CD8-positive, alpha-beta T cell (primary cell): ENCODE measurements at regions of chr1 and their contacts with region 1.

Region 1: GRCh38 chr1:203702130-203702577 is 62.8 kb upstream of the LAX1 start:
- DNase-seq: peak; percentile 33 to 84 (median 75)
- ATAC-seq: peak; percentile 70
- H3K4me3 ChIP-seq: no peak overlapping the region
- H3K4me3 Mint-ChIP-seq: no peak overlapping the region
- H3K27ac ChIP-seq: peak overlapping the region in 1 of 2 experiments; percentile 29
- H3K27ac Mint-ChIP-seq: peak overlapping the region; percentile 69
- H3K4me1 ChIP-seq: no peaks in the 10 kb centered on the region
- H3K4me1 Mint-ChIP-seq: peaks cover 4% of the 10 kb centered on the region
- H3K27me3 ChIP-seq: no peaks in the 10 kb centered on the region
- H3K27me3 Mint-ChIP-seq: no peaks in the 10 kb centered on the region
- CTCF ChIP-seq: peak; percentile 91

Region 2: GRCh38 chr1:203486618-203487370 is 215.4 kb before region 1 on chr1:
- CTCF ChIA-PET with region 1: interaction called, 11 read pairs
- POLR2A ChIA-PET with region 1: no interaction called
- intact Hi-C with region 1: no loop called
- DNase-seq: peak in 1 of 9 experiments; percentile 15
- ATAC-seq: no peak
- H3K4me3 ChIP-seq: peak overlapping the region in 1 of 2 experiments; percentile 65
- H3K4me3 Mint-ChIP-seq: peak overlapping the region; percentile 82
- H3K27ac ChIP-seq: peak overlapping the region in 1 of 2 experiments; percentile 6
- H3K27ac Mint-ChIP-seq: no peak overlapping the region
- H3K4me1 ChIP-seq: peaks cover 13% of the 10 kb centered on the region
- H3K4me1 Mint-ChIP-seq: peaks cover 10% of the 10 kb centered on the region
- H3K27me3 ChIP-seq: no peaks in the 10 kb centered on the region
- H3K27me3 Mint-ChIP-seq: no peaks in the 10 kb centered on the region
- CTCF ChIP-seq: no peak

Region 3: GRCh38 chr1:203593723-203594122 is 108.4 kb before region 1 on chr1:
- CTCF ChIA-PET with region 1: interaction called, 123 read pairs
- POLR2A ChIA-PET with region 1: no interaction called
- intact Hi-C with region 1: loop called (anchors 1 kb)
- DNase-seq: peak; percentile 32 to 82 (median 63)
- ATAC-seq: peak; percentile 85
- H3K4me3 ChIP-seq: no peak overlapping the region
- H3K4me3 Mint-ChIP-seq: no peak overlapping the region
- H3K27ac ChIP-seq: no peak overlapping the region
- H3K27ac Mint-ChIP-seq: no peak overlapping the region
- H3K4me1 ChIP-seq: no peaks in the 10 kb centered on the region
- H3K4me1 Mint-ChIP-seq: peaks cover 8% of the 10 kb centered on the region
- H3K27me3 ChIP-seq: no peaks in the 10 kb centered on the region
- H3K27me3 Mint-ChIP-seq: no peaks in the 10 kb centered on the region
- CTCF ChIP-seq: peak; percentile 35

Region 4: DNA sequence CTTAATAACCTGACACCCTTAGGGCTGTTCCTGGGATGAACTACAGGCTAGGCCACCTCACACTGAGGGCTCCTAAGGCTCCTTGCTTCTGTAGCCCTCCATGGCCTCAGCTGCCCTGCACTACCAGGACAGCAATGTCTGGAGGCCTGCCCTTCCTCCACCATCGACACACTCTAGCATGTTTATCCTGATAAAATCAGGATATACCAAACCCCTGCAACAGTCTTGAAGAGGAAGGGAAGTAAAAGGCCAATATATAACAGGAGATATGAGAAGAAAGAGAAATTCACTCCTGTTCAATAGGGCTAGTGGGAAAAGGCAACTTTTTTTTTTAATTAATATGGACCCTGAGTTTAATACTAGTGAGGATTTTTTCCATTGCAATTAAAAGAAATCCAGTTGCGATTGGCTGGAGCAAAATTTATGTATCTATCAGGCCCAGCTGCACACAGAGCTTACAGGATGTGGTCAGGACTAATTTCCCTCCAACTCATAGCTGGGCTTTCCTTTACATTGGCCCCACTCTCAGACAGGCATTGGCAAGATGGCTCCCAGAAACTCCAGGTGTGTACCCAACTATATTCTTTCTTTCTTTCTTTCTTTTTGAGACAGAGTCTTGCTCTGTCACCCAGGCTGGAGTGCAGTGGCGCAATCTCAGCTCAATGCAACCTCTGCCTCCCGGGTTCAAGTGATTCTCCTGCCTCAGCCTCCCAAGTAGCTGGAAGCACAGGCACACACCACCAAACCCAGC is 89.0 kb before region 1 on chr1:
- CTCF ChIA-PET with region 1: interaction called, 25 read pairs
- POLR2A ChIA-PET with region 1: no interaction called
- intact Hi-C with region 1: loop called in 1 of 2 experiments (anchors 5 kb)
- DNase-seq: peak in 2 of 9 experiments; percentile 37 to 57
- ATAC-seq: peak; percentile 49
- H3K4me3 ChIP-seq: no peak overlapping the region
- H3K4me3 Mint-ChIP-seq: no peak overlapping the region
- H3K27ac ChIP-seq: no peak overlapping the region
- H3K27ac Mint-ChIP-seq: no peak overlapping the region
- H3K4me1 ChIP-seq: peaks cover 10% of the 10 kb centered on the region
- H3K4me1 Mint-ChIP-seq: peaks cover 30% of the 10 kb centered on the region
- H3K27me3 ChIP-seq: no peaks in the 10 kb centered on the region
- H3K27me3 Mint-ChIP-seq: no peaks in the 10 kb centered on the region
- CTCF ChIP-seq: no peak

Region 5: GRCh38 chr1:203667616-203668015 is 34.5 kb before region 1 on chr1:
- CTCF ChIA-PET with region 1: interaction called, 18 read pairs
- POLR2A ChIA-PET with region 1: interaction called, 3 read pairs
- intact Hi-C with region 1: no loop called
- DNase-seq: no peak
- ATAC-seq: no peak
- H3K4me3 ChIP-seq: no peak overlapping the region
- H3K4me3 Mint-ChIP-seq: no peak overlapping the region
- H3K27ac ChIP-seq: no peak overlapping the region
- H3K27ac Mint-ChIP-seq: no peak overlapping the region
- H3K4me1 ChIP-seq: peaks cover 20% of the 10 kb centered on the region
- H3K4me1 Mint-ChIP-seq: peaks cover 56% of the 10 kb centered on the region
- H3K27me3 ChIP-seq: no peaks in the 10 kb centered on the region
- H3K27me3 Mint-ChIP-seq: no peaks in the 10 kb centered on the region
- CTCF ChIP-seq: no peak

Region 6: DNA sequence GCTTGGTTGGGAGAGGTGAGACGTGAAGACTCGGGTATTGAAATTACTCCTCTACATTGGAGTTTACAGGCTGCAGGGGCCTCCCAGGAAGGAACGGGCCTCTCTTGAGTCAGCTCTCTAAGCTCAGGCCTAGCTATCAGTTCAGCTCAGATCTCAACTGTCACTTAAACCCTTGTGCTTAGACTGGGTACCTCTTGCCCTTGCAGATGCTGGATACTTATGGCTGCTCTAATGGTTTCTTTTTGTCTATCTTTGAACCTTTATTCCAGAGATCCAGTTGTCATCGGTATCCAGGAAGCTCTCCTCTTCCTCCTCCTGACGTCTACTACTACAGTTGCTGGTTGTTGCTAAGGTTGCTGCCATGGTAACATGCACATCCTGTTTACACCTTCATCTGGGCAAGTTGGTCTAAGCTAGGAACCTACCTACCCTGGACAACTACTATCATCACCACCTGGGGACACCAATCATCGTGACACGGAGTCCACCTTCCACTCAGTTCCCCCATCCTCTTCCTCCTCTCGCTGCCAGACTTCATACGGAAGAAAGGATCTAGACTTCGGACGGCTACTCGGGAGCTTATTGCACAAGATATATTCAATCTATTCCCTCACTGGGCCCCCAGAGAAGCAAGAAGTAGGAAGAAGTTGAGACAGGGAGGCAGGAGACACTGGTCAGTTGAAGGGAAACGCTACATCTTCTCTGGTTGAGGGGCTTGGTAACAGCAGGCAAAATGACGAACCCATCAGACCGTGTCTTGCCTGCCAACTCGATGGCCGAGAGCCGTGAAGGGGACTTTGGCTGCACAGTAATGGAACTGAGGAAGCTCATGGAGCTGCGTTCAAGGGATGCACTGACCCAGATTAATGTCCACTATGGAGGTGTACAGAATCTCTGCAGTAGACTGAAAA is 19.4 kb before region 1 on chr1:
- CTCF ChIA-PET with region 1: interaction called, 57 read pairs
- POLR2A ChIA-PET with region 1: interaction called, 4 read pairs
- intact Hi-C with region 1: no loop called
- DNase-seq: peak; percentile 19 to 94 (median 59)
- ATAC-seq: peak; percentile 89
- H3K4me3 ChIP-seq: no peak overlapping the region
- H3K4me3 Mint-ChIP-seq: peak overlapping the region; percentile 48
- H3K27ac ChIP-seq: peak overlapping the region; percentile 33 to 82
- H3K27ac Mint-ChIP-seq: peak overlapping the region; percentile 93
- H3K4me1 ChIP-seq: peaks cover 22% of the 10 kb centered on the region
- H3K4me1 Mint-ChIP-seq: peaks cover 43% of the 10 kb centered on the region
- H3K27me3 ChIP-seq: no peaks in the 10 kb centered on the region
- H3K27me3 Mint-ChIP-seq: no peaks in the 10 kb centered on the region
- CTCF ChIP-seq: no peak